Aorta (tissue), 5 donors: ENCODE measurements at regions of chr10 and their contacts with region 1.

Region 1: GRCh38 chr10:97553575-97554031 is 19.0 kb upstream of the ANKRD2 start:
- DNase-seq: peak; percentile 79 to 90
- ATAC-seq: peak; percentile 92
- H3K4me3 ChIP-seq: no peak overlapping the region
- H3K27ac ChIP-seq: no peak overlapping the region
- H3K4me1 ChIP-seq: no peaks in the 10 kb centered on the region
- H3K27me3 ChIP-seq: no peaks in the 10 kb centered on the region

Region 2: DNA sequence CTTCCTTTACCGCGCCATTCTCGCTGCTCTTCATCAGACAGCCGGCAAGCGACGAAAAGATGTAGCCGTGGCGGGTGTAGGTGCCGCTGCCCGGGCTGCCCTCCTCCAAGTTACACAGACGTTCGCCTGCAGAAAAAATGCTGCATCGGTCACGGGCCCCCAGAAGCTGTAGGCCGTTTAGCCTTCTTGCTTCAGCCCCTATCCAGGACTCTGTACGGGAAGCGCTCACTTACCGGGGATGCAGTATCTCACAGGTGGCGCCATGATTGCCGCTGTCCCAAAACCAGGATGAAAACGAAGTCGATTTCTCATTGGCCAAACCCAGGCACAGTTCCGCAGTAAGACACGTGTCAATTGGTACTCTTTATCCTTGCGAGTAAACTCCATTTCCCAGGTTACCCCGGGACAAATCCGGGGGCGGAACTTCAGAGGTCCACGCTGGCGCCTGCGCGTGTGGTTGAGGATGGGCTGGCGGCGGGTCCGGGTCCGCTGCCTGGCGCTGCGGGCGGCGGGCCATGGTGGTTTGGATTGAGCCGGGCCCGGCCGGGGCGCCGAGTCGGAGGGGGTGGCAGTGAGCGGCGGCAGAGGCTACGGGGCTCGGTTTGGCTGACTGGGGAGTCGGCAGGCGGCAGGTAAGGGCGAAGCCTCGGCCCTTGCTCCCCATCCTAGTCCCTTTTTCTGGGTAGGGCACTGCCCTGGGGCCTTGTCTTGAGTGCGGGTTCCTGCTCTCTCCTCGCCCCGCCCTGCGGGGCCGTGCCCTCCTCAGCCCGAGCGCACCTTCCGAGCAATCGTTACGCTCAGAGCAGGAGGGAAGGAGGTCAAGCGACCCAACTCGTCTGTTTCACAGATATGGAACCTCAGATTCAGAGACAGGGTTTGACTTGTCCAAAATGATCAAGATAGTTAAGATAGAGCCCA is 107.6 kb before region 1 on chr10 and contains the starts of genes EXOSC1 and ZDHHC16:
- intact Hi-C with region 1: loop called in 1 of 2 experiments (anchors 5 kb)
- DNase-seq: peak; percentile 94 to 96
- ATAC-seq: peak; percentile 99
- H3K4me3 ChIP-seq: peak within 1 kb of the TSS; percentile 89 to 92
- H3K27ac ChIP-seq: no peak within 1 kb of the TSS
- H3K4me1 ChIP-seq: peaks cover 7 to 8% of the 10 kb centered on the region in 2 donors
- H3K27me3 ChIP-seq: no peaks in the 10 kb centered on the region
- total RNA-seq, gene EXOSC1: 25.6 to 27.2 TPM
- total RNA-seq, gene ZDHHC16: 29.6 to 35.6 TPM

Region 3: GRCh38 chr10:97463363-97464132 is 90.1 kb before region 1 on chr10:
- intact Hi-C with region 1: loop called (anchors 1 to 2 kb)
- DNase-seq: no peak
- ATAC-seq: peak; percentile 67
- H3K4me3 ChIP-seq: no peak overlapping the region
- H3K27ac ChIP-seq: peak overlapping the region in 1 of 2 donors; percentile 6
- H3K4me1 ChIP-seq: no peaks in the 10 kb centered on the region
- H3K27me3 ChIP-seq: no peaks in the 10 kb centered on the region

Region 4: DNA sequence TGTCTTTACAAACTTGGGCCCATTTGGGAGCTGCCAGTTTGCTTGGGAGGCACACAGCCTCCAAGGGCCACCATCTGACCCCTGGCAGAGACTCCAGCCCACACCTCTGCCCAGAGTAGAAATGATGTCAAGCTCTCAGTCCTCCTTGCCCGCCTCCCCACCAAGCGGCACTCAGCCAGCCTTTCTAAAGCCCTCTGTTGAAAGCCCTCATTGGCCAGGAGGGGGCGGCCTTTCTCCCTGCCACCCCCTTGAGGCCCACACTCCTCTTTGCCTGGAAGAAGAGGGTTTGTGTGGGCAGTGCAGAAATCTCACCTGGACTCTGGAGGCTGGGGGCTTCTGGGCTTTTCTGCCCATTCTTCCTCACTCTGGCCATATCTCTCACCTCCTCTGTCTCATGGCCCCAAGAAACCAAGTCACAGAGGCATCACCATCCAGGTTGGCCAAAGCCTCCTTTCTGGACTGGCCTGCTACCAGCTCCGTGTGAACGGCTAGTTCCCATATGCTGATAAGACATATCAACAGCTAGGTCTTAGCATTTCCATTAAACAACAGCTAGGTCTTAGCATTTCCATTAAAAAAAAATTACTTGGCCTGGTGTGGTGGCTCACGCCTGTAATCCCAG is 18.7 kb before region 1 on chr10:
- intact Hi-C with region 1: loop called in 1 of 2 experiments (anchors 2 kb)
- DNase-seq: peak in 1 of 2 donors; percentile 59
- ATAC-seq: no peak
- H3K4me3 ChIP-seq: no peak overlapping the region
- H3K27ac ChIP-seq: no peak overlapping the region
- H3K4me1 ChIP-seq: no peaks in the 10 kb centered on the region
- H3K27me3 ChIP-seq: no peaks in the 10 kb centered on the region

Region 5: GRCh38 chr10:97648562-97649404 is 95.2 kb after region 1 on chr10:
- intact Hi-C with region 1: no loop called
- DNase-seq: no peak
- ATAC-seq: peak; percentile 81
- H3K4me3 ChIP-seq: no peak overlapping the region
- H3K27ac ChIP-seq: no peak overlapping the region
- H3K4me1 ChIP-seq: peaks cover 2 to 4% of the 10 kb centered on the region in 2 donors
- H3K27me3 ChIP-seq: no peaks in the 10 kb centered on the region